ENCODE measurements at regions of chr16 and their contacts with region 1.

Region 1: DNA sequence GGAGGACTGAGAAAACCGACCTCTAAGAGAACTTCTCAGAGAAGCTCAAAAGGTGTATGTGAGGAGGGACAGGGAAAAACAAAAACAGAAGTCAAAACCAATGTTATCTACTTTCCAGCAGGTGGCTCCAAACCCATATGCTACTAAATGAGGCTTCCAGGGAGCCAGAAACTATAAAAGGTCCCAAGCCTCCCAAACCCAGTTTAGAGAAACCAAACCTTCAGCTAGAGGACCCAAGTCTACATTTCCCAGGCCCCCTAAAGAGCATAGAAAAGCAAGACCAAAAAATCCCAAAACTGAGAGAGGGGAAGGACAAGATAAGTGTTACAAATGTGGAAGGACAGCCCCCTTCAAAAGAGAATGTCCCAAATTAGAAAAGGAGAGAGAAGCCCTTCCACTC is 3.7 kb downstream of the HPR start:
- DNase-seq: peak in 1 of 5 donors; percentile 35
- H3K4me3 ChIP-seq: no peak overlapping the region
- H3K27ac ChIP-seq: no peak overlapping the region
- H3K4me1 ChIP-seq: peaks cover 6% of the 10 kb centered on the region
- H3K27me3 ChIP-seq: no peaks in the 10 kb centered on the region
- CTCF ChIP-seq: peak in 2 of 3 donors; percentile 44 to 57
- EP300 ChIP-seq: no peak
- POLR2A ChIP-seq: no peak

Region 2: GRCh38 chr16:72099377-72099818 is 32.7 kb after region 1 on chr16:
- intact Hi-C with region 1: loop called in 2 of 4 experiments (anchors 2 to 5 kb)
- DNase-seq: peak in 2 of 5 donors; percentile 34 to 37
- H3K4me3 ChIP-seq: no peak overlapping the region
- H3K27ac ChIP-seq: no peak overlapping the region
- H3K4me1 ChIP-seq: peaks cover 1% of the 10 kb centered on the region
- H3K27me3 ChIP-seq: no peaks in the 10 kb centered on the region
- CTCF ChIP-seq: peak in 1 of 3 donors; percentile 18
- EP300 ChIP-seq: no peak
- POLR2A ChIP-seq: no peak

Region 3: DNA sequence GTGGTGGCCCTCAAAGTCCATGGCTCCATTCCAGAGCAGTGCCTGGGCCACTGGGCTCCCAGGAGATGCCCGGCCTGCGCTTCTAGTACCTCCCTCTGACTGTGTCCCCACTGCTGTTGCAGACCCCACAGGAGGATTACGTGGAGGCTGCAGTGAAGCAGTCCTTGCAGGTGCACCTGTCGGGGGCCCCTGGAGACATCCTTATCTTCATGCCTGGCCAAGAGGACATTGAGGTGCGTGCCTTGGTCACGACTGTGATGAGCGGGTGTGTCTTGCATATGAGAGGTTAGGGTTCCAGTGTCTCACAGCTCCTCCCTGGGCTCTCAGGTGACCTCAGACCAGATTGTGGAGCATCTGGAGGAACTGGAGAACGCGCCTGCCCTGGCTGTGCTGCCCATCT is 38.2 kb after region 1 on chr16:
- intact Hi-C with region 1: loop called in 1 of 4 experiments (anchors 5 kb)
- DNase-seq: no peak
- H3K4me3 ChIP-seq: no peak overlapping the region
- H3K27ac ChIP-seq: no peak overlapping the region
- H3K4me1 ChIP-seq: no peaks in the 10 kb centered on the region
- H3K27me3 ChIP-seq: no peaks in the 10 kb centered on the region
- CTCF ChIP-seq: no peak
- EP300 ChIP-seq: no peak
- POLR2A ChIP-seq: no peak

Measured in ovary (tissue), 10 donors.